ENCODE measurements at regions of chr17 and their contacts with region 1.

Region 1: DNA sequence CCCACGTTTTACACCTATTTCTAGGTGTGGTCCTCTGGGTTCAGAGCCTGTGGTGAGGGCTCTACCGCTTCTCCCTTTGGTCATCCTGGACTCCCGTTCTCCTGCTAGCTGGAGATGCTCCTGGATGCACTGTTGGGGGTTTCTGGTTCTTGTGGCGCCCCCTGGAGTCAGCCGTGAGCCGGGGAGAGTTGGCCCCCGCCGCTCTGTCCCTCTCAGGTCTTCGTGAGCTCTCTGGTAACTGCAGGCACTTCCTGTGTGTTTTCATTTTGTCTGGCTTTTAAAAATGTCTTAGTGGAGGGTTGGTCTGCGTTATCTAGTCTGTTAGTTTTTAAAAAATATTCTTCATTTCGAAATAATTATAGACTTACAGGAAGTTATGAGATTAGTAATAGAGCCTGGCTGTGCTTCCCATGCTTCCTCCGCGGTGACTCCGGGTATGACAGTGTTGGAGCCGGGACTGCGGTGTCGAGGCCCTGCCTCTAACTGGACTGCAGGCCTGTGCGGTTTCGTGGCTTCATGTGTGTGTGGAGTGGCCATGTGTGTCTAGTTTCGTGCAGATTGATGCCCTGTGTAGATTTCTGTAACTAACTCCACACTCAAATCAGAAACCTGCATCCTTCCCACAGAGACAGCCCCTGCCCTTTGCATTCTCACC is 78.0 kb upstream of the ZNF750 start:
- DNase-seq: no peak
- H3K4me3 ChIP-seq: no peak overlapping the region
- H3K27ac ChIP-seq: no peak overlapping the region
- H3K4me1 ChIP-seq: peaks cover 19% of the 10 kb centered on the region
- H3K27me3 ChIP-seq: no peaks in the 10 kb centered on the region
- CTCF ChIP-seq: peak; percentile 47

Region 2: DNA sequence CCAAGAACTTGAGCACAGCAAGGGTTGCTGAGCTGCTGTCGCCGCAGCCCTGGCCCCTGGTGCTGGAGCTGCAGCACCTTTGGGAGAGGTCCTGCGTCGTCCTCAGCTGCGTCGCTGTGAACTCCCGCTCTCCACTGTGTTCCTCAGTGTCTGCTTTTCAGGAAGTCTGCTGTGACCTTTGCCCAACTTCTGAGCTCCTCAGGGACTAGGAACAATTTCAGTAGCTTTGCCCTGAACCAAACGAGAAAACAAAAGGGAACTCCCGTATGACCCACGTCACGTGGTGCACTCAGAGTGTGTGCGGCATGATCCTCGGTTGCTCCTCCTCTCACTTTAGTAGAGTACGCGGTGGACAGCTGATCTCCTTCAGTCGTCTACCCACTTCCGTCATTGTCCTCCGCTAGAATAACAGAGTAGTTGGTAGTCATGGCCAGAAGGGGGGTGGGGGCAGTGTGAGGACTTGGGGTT is 313.8 kb before region 1 on chr17:
- intact Hi-C with region 1: no loop called
- DNase-seq: peak; percentile 56
- H3K4me3 ChIP-seq: peak overlapping the region; percentile 45
- H3K27ac ChIP-seq: peak overlapping the region; percentile 66
- H3K4me1 ChIP-seq: peaks cover 53% of the 10 kb centered on the region
- H3K27me3 ChIP-seq: no peaks in the 10 kb centered on the region
- CTCF ChIP-seq: no peak

Region 3: GRCh38 chr17:82781894-82782274 is 135.9 kb before region 1 on chr17:
- intact Hi-C with region 1: loop called (anchors 5 kb)
- DNase-seq: peak; percentile 82
- H3K4me3 ChIP-seq: peak overlapping the region; percentile 27
- H3K27ac ChIP-seq: peak overlapping the region; percentile 80
- H3K4me1 ChIP-seq: peaks cover 14% of the 10 kb centered on the region
- H3K27me3 ChIP-seq: no peaks in the 10 kb centered on the region
- CTCF ChIP-seq: peak; percentile 99

Measured in left ventricle myocardium inferior (tissue), 1 donor.